Activated naive CD4-positive, alpha-beta T cell treated with anti-CD3 and anti-CD28 coated beads, Interleukin-2, amount 10 ng/mL, durations not matched to agents 7 days and 5 days (primary cell): ENCODE measurements at regions of chr18 and their contacts with region 1.

Region 1: GRCh38 chr18:13216092-13216582 is 2.4 kb upstream of the LDLRAD4 start:
- DNase-seq: peak; percentile 71
- H3K4me3 Mint-ChIP-seq: peak overlapping the region; percentile 70
- H3K27ac Mint-ChIP-seq: no peak overlapping the region
- H3K4me1 Mint-ChIP-seq: peaks cover 35% of the 10 kb centered on the region
- H3K27me3 Mint-ChIP-seq: peaks cover 50% of the 10 kb centered on the region

Region 2: DNA sequence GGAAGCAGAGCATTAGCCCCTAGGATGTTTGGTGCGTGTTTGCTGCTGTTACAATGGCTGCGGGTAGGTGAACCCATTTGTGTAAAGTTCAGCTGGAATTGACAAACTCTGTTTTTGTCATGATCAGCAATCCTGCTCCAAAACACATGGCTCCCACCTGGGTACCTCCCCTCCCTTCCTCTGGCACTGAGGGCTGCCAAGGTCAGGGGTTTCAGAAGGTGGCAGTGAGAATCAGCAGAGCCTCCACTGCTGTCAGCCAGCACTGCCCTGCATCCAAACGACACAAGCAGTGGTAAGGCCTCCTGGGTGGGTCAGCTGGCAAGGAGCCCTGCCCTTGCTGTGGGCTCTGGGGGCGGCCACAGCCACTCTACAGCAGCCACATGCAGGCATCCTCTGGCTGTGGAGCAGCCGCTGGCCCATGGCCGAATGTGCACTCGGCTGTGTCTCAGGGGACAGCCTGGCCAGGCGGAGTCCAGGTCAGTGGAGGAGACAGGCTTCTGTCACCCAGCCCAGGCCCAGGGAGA is 30.4 kb before region 1 on chr18:
- CTCF ChIA-PET with region 1: no interaction called
- DNase-seq: no peak
- H3K4me3 Mint-ChIP-seq: no peak overlapping the region
- H3K27ac Mint-ChIP-seq: no peak overlapping the region
- H3K4me1 Mint-ChIP-seq: peaks cover 2% of the 10 kb centered on the region
- H3K27me3 Mint-ChIP-seq: peaks cover 24% of the 10 kb centered on the region

Region 3: GRCh38 chr18:13513021-13513420 is 296.9 kb after region 1 on chr18:
- CTCF ChIA-PET with region 1: interaction called, 11 read pairs
- DNase-seq: no peak
- H3K4me3 Mint-ChIP-seq: no peak overlapping the region
- H3K27ac Mint-ChIP-seq: no peak overlapping the region
- H3K4me1 Mint-ChIP-seq: peaks cover 26% of the 10 kb centered on the region
- H3K27me3 Mint-ChIP-seq: no peaks in the 10 kb centered on the region

Region 4: DNA sequence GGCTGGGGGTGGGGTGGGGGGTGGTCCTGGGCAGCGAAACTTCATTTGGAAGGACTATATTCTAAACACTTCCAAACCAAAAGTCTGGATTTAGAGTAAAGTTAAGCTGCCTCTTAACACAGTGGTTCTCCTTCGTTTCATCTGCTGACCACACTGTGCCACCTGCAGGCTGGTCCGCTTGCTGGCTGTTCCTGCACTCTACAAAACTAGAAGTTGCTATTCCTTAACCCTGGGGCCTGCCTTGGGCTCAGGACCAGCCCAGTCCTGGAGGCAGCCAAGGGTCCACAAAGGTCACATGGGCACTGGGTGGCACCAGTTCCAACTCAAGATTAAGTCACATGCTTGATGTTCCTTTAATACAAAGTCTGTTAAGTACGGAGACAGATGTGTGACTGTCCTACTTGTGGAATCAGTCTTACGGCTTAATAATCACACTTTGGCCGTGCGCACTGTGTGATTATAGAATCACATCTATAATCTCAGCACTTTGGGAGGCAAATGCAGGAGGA is 314.8 kb after region 1 on chr18:
- CTCF ChIA-PET with region 1: interaction called, 23 read pairs
- DNase-seq: peak; percentile 41
- H3K4me3 Mint-ChIP-seq: no peak overlapping the region
- H3K27ac Mint-ChIP-seq: no peak overlapping the region
- H3K4me1 Mint-ChIP-seq: peaks cover 16% of the 10 kb centered on the region
- H3K27me3 Mint-ChIP-seq: no peaks in the 10 kb centered on the region

Region 5: GRCh38 chr18:13558124-13558523 is 342.0 kb after region 1 on chr18:
- CTCF ChIA-PET with region 1: interaction called, 34 read pairs
- DNase-seq: peak; percentile 44
- H3K4me3 Mint-ChIP-seq: no peak overlapping the region
- H3K27ac Mint-ChIP-seq: no peak overlapping the region
- H3K4me1 Mint-ChIP-seq: peaks cover 27% of the 10 kb centered on the region
- H3K27me3 Mint-ChIP-seq: no peaks in the 10 kb centered on the region

Region 6: DNA sequence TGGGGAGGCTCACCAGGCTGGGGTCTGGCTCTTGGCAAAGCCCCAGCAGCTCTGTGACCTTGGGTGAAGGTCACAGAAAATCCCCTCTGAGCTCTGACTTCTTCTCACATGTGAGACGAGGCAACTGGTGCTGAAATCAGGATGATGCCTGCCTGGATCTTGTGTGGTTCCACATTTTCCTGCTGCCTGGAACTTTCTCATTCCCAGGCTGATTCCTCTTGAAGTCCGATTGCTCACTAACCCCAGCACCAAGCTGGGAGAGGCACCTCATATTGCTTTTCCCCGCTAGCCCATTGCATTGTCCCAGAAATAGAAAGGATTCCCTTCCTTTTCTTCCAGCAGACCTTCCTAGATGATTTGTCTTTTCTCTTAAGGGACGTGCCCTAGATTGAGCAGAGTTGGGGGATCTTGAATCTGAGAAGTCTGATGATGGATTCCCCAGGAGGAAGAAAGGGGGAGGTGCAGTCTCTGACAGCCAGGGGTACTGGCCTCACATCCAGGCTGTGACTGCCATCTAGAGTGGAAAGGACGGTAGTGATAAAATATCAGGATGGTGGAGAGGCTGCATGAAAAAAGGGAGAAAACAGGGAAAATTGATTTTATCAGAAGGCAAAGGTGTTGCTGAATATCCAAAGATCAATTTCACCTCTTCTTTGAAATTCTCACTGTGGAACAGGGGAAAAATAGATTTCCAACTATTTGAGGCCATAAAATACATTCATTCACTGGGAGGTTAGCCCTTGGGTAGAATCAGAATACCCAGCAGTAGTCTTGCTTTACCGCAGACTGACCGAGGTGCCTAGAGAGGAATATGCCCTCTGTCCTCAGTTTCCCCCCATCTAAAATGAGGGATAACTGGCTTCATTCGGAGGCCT is 413.9 kb after region 1 on chr18:
- CTCF ChIA-PET with region 1: interaction called, 29 read pairs
- DNase-seq: peak; percentile 68
- H3K4me3 Mint-ChIP-seq: no peak overlapping the region
- H3K27ac Mint-ChIP-seq: no peak overlapping the region
- H3K4me1 Mint-ChIP-seq: peaks cover 13% of the 10 kb centered on the region
- H3K27me3 Mint-ChIP-seq: no peaks in the 10 kb centered on the region